ENCODE measurements at regions of chr17 and their contacts with region 1.

Region 1: GRCh38 chr17:62109378-62109902 is 44.4 kb upstream of the MED13 start:
- DNase-seq: peak; percentile 43
- ATAC-seq: peak; percentile 100
- H3K4me3 Mint-ChIP-seq: no peak overlapping the region
- H3K27ac Mint-ChIP-seq: no peak overlapping the region
- H3K4me1 Mint-ChIP-seq: peaks cover 3% of the 10 kb centered on the region
- H3K27me3 Mint-ChIP-seq: no peaks in the 10 kb centered on the region
- CTCF ChIP-seq: no peak

Region 2: DNA sequence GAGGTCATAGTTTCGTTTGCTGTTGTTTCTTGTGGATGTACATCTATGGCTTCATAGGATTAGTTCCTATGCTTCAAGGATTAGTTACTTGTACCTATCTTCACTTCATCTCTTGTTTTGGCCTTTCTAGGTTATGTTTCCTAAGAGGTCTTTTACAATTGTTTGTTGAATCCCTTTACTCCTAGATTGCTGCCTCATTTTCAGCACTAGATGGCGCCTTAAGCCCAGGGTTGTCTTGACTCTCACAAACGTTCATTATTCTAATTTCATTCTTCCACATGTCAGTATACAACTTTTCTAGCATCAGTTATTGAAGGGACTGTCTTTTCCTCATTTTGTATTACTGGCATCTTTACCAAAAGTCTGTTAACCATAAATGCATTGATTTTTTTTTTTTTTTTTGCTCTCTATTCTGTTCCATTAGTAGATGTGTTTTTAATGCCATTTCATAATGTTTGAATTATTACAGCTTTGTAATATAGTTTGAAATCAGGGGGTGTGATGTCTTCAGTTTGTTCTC is 473.5 kb before region 1 on chr17:
- CTCF ChIA-PET with region 1: interaction called, 10 read pairs
- POLR2A ChIA-PET with region 1: no interaction called
- intact Hi-C with region 1: loop called (anchors 1 kb)
- DNase-seq: no peak
- ATAC-seq: no peak
- H3K4me3 Mint-ChIP-seq: no peak overlapping the region
- H3K27ac Mint-ChIP-seq: no peak overlapping the region
- H3K4me1 Mint-ChIP-seq: peaks cover 10% of the 10 kb centered on the region
- H3K27me3 Mint-ChIP-seq: peaks cover 34% of the 10 kb centered on the region
- CTCF ChIP-seq: peak; percentile 70

Region 3: GRCh38 chr17:61997664-61998063 is 111.8 kb before region 1 on chr17:
- CTCF ChIA-PET with region 1: interaction called, 8 read pairs
- POLR2A ChIA-PET with region 1: no interaction called
- intact Hi-C with region 1: loop called (anchors 5 kb)
- DNase-seq: no peak
- ATAC-seq: no peak
- H3K4me3 Mint-ChIP-seq: no peak overlapping the region
- H3K27ac Mint-ChIP-seq: no peak overlapping the region
- H3K4me1 Mint-ChIP-seq: peaks cover 19% of the 10 kb centered on the region
- H3K27me3 Mint-ChIP-seq: no peaks in the 10 kb centered on the region
- CTCF ChIP-seq: no peak

Region 4: GRCh38 chr17:62045109-62045905 is 64.1 kb before region 1 on chr17:
- CTCF ChIA-PET with region 1: interaction called, 9 read pairs
- POLR2A ChIA-PET with region 1: no interaction called
- intact Hi-C with region 1: loop called (anchors 1 kb)
- DNase-seq: no peak
- ATAC-seq: no peak
- H3K4me3 Mint-ChIP-seq: no peak overlapping the region
- H3K27ac Mint-ChIP-seq: no peak overlapping the region
- H3K4me1 Mint-ChIP-seq: peaks cover 26% of the 10 kb centered on the region
- H3K27me3 Mint-ChIP-seq: no peaks in the 10 kb centered on the region
- CTCF ChIP-seq: no peak

Region 5: DNA sequence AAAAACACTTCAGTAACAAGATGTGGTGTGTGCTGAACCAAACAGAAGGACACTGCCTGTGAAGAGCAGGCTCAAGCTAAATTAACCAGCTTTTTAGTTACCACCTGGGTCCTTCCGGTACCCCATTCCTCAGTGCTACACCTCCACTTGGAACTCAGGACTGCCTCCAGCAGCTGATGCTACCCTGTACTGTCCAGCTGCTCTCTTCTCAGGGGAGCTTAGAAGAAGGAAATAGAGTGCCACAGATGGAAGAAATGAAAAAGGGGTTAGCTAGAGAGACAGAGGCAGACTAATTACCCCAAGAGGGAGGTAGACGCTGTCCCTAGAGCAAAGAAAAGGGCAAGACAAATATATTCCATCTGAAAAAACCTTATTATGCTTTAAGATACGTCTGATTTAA is 50.0 kb before region 1 on chr17:
- CTCF ChIA-PET with region 1: interaction called, 21 read pairs
- POLR2A ChIA-PET with region 1: no interaction called
- intact Hi-C with region 1: no loop called
- DNase-seq: no peak
- ATAC-seq: no peak
- H3K4me3 Mint-ChIP-seq: no peak overlapping the region
- H3K27ac Mint-ChIP-seq: no peak overlapping the region
- H3K4me1 Mint-ChIP-seq: peaks cover 59% of the 10 kb centered on the region
- H3K27me3 Mint-ChIP-seq: no peaks in the 10 kb centered on the region
- CTCF ChIP-seq: no peak

Region 6: GRCh38 chr17:62075308-62075815 is 34.1 kb before region 1 on chr17:
- CTCF ChIA-PET with region 1: interaction called, 10 read pairs
- POLR2A ChIA-PET with region 1: no interaction called
- intact Hi-C with region 1: no loop called
- DNase-seq: no peak
- ATAC-seq: no peak
- H3K4me3 Mint-ChIP-seq: no peak overlapping the region
- H3K27ac Mint-ChIP-seq: no peak overlapping the region
- H3K4me1 Mint-ChIP-seq: no peaks in the 10 kb centered on the region
- H3K27me3 Mint-ChIP-seq: peaks cover 5% of the 10 kb centered on the region
- CTCF ChIP-seq: no peak

Region 7: GRCh38 chr17:62098623-62099231 is 10.7 kb before region 1 on chr17:
- CTCF ChIA-PET with region 1: interaction called, 30 read pairs
- POLR2A ChIA-PET with region 1: interaction called, 9 read pairs
- intact Hi-C with region 1: loop called (anchors 1 kb)
- DNase-seq: no peak
- ATAC-seq: peak; percentile 81
- H3K4me3 Mint-ChIP-seq: peak overlapping the region; percentile 55
- H3K27ac Mint-ChIP-seq: peak overlapping the region; percentile 84
- H3K4me1 Mint-ChIP-seq: peaks cover 38% of the 10 kb centered on the region
- H3K27me3 Mint-ChIP-seq: no peaks in the 10 kb centered on the region
- CTCF ChIP-seq: no peak